ENCODE measurements at regions of chr3 and their contacts with region 1.

Region 1: DNA sequence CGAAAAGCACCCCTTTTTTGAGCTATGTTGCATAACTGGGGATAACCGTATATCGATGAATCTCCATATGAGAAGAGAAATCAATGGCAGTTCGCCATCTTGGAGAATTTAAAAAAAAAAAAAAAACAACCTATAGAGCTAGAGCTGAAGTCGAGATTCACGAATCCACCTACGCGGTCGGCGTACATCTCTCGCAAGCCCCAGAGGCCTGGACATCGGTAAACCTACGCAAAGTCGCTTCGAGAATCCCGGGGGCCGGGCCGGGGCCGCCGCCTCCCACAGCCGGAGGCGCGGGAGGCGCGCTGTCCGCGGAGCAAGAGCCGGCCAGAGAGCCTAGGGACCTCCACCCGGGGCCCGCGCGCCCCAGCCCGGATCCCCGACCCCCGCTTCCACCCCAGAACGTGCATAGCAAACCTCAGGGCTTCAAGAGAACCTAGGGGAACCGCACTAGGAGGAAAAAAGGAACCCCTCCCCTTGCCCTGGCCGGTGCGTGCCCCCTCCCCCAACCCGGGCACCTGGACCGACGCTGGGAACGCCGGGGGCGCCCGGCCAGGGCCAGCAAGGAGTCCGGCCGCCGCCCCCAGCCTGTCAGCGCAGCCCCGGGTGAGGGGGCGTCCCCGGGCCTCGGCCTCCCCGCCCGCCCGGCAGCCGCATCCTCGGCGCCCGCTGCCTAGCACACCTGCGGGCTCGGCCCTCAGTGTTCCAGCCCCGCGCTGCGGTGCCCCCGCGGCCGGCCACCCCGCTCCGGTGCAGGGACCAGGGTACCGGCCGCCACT is 567 bp downstream of the PFN2 start:
- DNase-seq: peak; percentile 92
- H3K4me3 ChIP-seq: peak overlapping the region; percentile 48 to 98 (median 92)
- H3K27ac ChIP-seq: peak overlapping the region; percentile 89 to 98 (median 94)
- H3K4me1 ChIP-seq: peaks cover 0 to 33% (median 22%) of the 10 kb centered on the region in 4 donors
- H3K27me3 ChIP-seq: peaks cover 3% of the 10 kb centered on the region
- CTCF ChIP-seq: no peak
- EP300 ChIP-seq: no peak
- POLR2A ChIP-seq: peak; percentile 7

Region 2: GRCh38 chr3:150521463-150521862 is 551.3 kb after region 1 on chr3:
- in situ Hi-C with region 1: loop called in 1 of 4 experiments (anchors 25 kb)
- intact Hi-C with region 1: no loop called
- DNase-seq: no peak
- H3K4me3 ChIP-seq: no peak overlapping the region
- H3K27ac ChIP-seq: no peak overlapping the region
- H3K4me1 ChIP-seq: peaks cover 0 to 5% (median 0%) of the 10 kb centered on the region in 4 donors
- H3K27me3 ChIP-seq: no peaks in the 10 kb centered on the region
- CTCF ChIP-seq: no peak
- EP300 ChIP-seq: no peak
- POLR2A ChIP-seq: no peak

Region 3: GRCh38 chr3:150555859-150556436 is 585.8 kb after region 1 on chr3:
- in situ Hi-C with region 1: no loop called
- intact Hi-C with region 1: no loop called
- DNase-seq: no peak
- H3K4me3 ChIP-seq: no peak overlapping the region
- H3K27ac ChIP-seq: no peak overlapping the region
- H3K4me1 ChIP-seq: no peaks in the 10 kb centered on the region
- H3K27me3 ChIP-seq: no peaks in the 10 kb centered on the region
- CTCF ChIP-seq: no peak
- EP300 ChIP-seq: no peak
- POLR2A ChIP-seq: no peak